ENCODE measurements at regions of chr3 and their contacts with region 1.

Region 1: DNA sequence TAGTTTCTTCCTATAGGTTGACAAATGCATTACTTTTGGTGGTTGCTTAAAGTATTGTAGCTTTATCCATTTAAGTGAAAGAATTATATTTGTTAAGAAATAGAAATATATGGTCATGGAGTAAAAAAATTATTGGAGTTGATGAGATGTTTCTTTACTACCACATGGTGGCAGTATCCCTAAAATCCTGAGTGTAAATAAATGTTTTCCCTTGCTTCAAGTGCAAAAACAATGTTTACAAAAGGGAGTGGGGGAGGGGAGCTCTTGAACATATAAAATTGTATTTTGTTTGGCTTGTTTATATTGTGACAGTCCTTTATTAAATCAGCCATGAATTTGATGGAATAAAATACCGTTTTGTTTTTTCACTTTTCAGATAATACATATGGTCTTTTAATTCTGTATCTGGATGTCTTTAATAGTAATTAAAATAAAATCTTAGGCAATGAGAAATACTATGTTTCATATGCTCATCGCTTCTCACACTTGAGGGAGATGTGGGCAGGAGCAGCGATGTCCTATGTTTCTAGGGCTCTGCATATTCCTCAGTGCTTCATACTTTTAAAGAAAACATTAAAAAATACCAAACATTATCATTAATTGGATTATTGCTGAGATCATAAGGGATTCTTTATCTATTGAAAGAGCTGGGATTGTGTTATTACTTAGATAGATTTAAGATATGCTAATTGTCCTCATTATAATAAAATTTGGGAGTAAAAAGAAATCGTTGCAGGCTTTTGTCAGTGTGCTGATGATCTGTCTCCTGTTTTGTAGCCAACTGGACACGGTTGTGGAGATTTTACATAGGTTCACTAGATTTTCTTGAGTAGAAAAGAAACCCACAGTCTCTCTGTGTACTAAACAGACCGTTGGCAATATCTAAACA is 349.7 kb downstream of the TUSC7 start:
- DNase-seq: no peak
- H3K4me3 ChIP-seq: no peak overlapping the region
- H3K27ac ChIP-seq: no peak overlapping the region
- H3K27me3 ChIP-seq: no peaks in the 10 kb centered on the region
- CTCF ChIP-seq: peak; percentile 49

Region 2: GRCh38 chr3:117080882-117081281 is 21.6 kb after region 1 on chr3:
- CTCF ChIA-PET with region 1: interaction called, 10 read pairs
- POLR2A ChIA-PET with region 1: no interaction called
- DNase-seq: no peak
- H3K4me3 ChIP-seq: no peak overlapping the region
- H3K27ac ChIP-seq: no peak overlapping the region
- H3K27me3 ChIP-seq: no peaks in the 10 kb centered on the region
- CTCF ChIP-seq: no peak

Region 3: GRCh38 chr3:117526470-117527079 is 467.3 kb after region 1 on chr3:
- CTCF ChIA-PET with region 1: interaction called, 11 read pairs
- POLR2A ChIA-PET with region 1: no interaction called
- DNase-seq: no peak
- H3K4me3 ChIP-seq: no peak overlapping the region
- H3K27ac ChIP-seq: no peak overlapping the region
- H3K27me3 ChIP-seq: no peaks in the 10 kb centered on the region
- CTCF ChIP-seq: peak; percentile 70